Panc1 (cell line): ENCODE measurements at regions of chr22 and their contacts with region 1.

Region 1: GRCh38 chr22:23240639-23241389 is 60.5 kb downstream of the BCR start:
- DNase-seq: no peak
- ATAC-seq: peak; percentile 71; the same call in 1 of the 2 replicates
- H3K4me3 ChIP-seq: no peak overlapping the region
- H3K27ac ChIP-seq: no peak overlapping the region
- H3K4me1 ChIP-seq: no peaks in the 10 kb centered on the region; the same call in 1 of the 2 replicates
- H3K27me3 ChIP-seq: no peaks in the 10 kb centered on the region
- CTCF ChIP-seq: no peak

Region 2: GRCh38 chr22:23178512-23179254 is 62.1 kb before region 1 on chr22:
- CTCF ChIA-PET with region 1: no interaction called
- POLR2A ChIA-PET with region 1: no interaction called
- in situ Hi-C with region 1: no loop called
- intact Hi-C with region 1: loop called (anchors 10 kb)
- DNase-seq: peak; percentile 28
- ATAC-seq: peak; percentile 58; the same call in 1 of the 2 replicates
- H3K4me3 ChIP-seq: no peak overlapping the region
- H3K27ac ChIP-seq: no peak overlapping the region
- H3K4me1 ChIP-seq: peaks cover 8% of the 10 kb centered on the region
- H3K27me3 ChIP-seq: no peaks in the 10 kb centered on the region
- CTCF ChIP-seq: peak; percentile 93

Region 3: GRCh38 chr22:23215294-23216241 is 25.2 kb before region 1 on chr22:
- CTCF ChIA-PET with region 1: no interaction called
- POLR2A ChIA-PET with region 1: no interaction called
- in situ Hi-C with region 1: no loop called
- intact Hi-C with region 1: loop called (anchors 2 kb)
- DNase-seq: no peak
- ATAC-seq: no peak
- H3K4me3 ChIP-seq: no peak overlapping the region
- H3K27ac ChIP-seq: no peak overlapping the region
- H3K4me1 ChIP-seq: no peaks in the 10 kb centered on the region; the same call in none of the 2 replicates
- H3K27me3 ChIP-seq: no peaks in the 10 kb centered on the region
- CTCF ChIP-seq: no peak

Region 4: DNA sequence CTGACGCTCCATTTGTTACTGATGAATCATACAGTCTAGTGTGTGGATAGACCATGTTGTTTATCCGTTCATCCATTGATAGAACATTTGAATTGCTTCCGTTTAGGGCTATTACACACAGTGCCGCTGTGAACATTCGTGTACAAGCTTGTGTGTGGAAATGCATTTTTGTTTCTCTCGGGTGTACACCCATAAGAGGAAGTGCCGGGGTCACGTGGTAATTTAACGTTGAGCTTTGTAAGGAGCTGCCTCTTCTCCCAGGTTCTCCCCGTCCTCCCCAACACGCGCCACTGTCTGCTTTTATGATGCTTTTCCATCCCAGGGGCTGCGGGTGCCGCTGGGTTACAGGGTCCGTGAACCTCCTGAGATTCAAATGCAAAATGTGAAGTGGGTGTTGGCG is 197.0 kb after region 1 on chr22:
- CTCF ChIA-PET with region 1: no interaction called
- POLR2A ChIA-PET with region 1: no interaction called
- in situ Hi-C with region 1: no loop called
- intact Hi-C with region 1: no loop called
- DNase-seq: no peak
- ATAC-seq: no peak
- H3K4me3 ChIP-seq: no peak overlapping the region
- H3K27ac ChIP-seq: no peak overlapping the region
- H3K4me1 ChIP-seq: no peaks in the 10 kb centered on the region
- H3K27me3 ChIP-seq: no peaks in the 10 kb centered on the region
- CTCF ChIP-seq: no peak

Region 5: GRCh38 chr22:23457355-23458068 is 216.7 kb after region 1 on chr22:
- CTCF ChIA-PET with region 1: no interaction called
- POLR2A ChIA-PET with region 1: no interaction called
- in situ Hi-C with region 1: no loop called
- intact Hi-C with region 1: no loop called
- DNase-seq: no peak
- ATAC-seq: no peak
- H3K4me3 ChIP-seq: no peak overlapping the region
- H3K27ac ChIP-seq: no peak overlapping the region
- H3K4me1 ChIP-seq: no peaks in the 10 kb centered on the region
- H3K27me3 ChIP-seq: no peaks in the 10 kb centered on the region
- CTCF ChIP-seq: no peak